Gastrocnemius medialis (tissue), 4 donors: ENCODE measurements at regions of chr21 and their contacts with region 1.

Region 1: DNA sequence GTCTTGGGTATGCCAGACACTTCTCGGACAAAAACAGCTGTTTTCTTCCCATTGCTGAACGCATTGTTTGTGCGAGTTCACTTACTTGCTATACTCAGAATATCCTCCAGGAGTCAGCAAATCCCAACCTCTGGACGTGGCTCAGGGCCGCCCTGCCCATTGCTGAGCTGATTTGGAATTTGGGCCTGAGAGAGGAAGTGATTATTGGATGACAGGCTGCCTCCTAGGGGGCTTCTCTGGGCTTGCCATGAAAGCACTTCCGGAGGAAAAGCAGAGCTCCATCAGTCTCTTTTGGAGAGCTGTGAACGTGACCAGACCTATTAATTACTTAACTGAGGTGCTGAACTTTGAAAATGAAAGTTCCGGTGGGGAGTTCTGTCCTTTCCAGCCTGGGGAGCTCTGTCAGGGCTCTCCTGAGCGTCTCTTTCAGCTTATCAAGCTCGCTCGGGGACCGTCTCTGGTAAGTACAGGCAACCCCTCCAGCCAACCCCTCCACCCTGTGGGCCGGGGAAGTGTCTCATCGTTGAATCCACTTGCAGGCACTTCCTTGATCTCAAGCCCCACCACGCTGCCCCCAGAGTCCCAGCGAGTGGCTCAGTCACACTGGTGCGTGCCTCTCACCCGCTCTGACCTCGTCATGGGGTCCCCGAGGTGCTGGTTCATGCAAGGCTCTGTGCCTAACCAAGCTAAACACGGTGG is 76.9 kb downstream of the CLIC6 start:
- DNase-seq: peak; percentile 48 to 61
- ATAC-seq: peak; percentile 87 to 90
- H3K4me3 ChIP-seq: peak overlapping the region in 1 of 4 donors; percentile 36
- H3K27ac ChIP-seq: peak overlapping the region in 1 of 4 donors; percentile 55
- H3K4me1 ChIP-seq: peaks cover 5 to 17% of the 10 kb centered on the region in 2 donors
- H3K27me3 ChIP-seq: no peaks in the 10 kb centered on the region
- CTCF ChIP-seq: peak; percentile 80 to 91 (median 88)
- POLR2A ChIP-seq: no peak

Region 2: DNA sequence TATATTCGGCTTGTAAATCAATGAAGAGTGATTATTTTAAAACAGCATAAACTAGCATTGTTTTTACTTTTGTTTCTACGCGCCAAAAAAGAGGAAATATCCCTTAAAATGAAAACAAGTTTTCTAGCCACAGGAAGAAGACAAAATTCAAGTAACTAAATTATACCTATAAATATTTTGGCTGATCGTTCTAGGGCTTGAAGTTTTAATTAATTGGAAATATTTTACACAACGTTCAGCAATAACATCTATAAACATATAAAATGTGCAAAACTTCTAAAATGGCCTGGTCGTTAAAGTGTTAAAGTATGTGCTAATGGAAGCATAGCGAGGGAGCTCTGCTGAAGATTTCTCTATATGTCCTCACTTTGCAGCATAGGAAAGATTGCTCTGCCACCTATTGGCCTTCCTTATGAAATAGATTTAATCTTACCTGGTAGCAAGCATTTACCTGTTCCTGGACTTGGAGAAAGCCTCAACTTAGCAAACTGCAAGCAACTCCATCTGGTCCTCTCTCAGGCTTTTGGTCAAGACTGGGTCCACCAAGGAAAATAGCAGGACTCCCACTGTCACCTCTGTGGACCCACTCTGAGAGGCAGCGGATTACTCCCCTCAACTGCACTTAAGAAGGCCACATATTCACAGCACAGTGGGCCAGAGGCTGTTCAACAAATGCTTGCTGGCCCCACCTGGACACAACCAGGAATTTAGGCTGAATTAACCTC is 654.7 kb after region 1 on chr21:
- in situ Hi-C with region 1: loop called in 2 of 4 experiments (anchors 5 to 10 kb)
- intact Hi-C with region 1: loop called (anchors 1 kb)
- DNase-seq: peak in 1 of 2 donors; percentile 8
- ATAC-seq: peak; percentile 93 to 98
- H3K4me3 ChIP-seq: no peak overlapping the region
- H3K27ac ChIP-seq: no peak overlapping the region
- H3K4me1 ChIP-seq: peaks cover 0 to 14% of the 10 kb centered on the region in 2 donors
- H3K27me3 ChIP-seq: no peaks in the 10 kb centered on the region
- CTCF ChIP-seq: peak; percentile 54 to 71 (median 59)
- POLR2A ChIP-seq: no peak

Region 3: DNA sequence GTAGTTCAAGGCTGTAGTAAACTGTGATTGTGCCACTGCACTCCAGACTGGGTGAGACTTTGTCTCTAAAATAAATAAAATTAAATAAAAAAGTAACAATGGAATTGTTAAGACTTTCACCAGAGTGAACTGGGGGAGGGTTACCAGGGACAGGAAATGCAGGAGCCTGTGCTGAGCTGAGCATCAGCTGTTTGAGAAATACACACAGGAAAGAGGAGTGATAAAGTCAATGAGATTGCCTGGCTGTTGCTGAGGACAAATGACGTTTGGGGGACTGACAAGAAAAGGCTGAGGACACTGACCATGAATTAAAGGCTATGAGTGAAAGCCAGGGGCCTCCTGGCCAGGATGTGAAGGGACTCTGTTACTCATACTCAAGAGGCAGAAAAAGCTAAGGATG is 1088.3 kb after region 1 on chr21:
- in situ Hi-C with region 1: loop called (anchors 10 to 25 kb)
- intact Hi-C with region 1: no loop called
- DNase-seq: no peak
- ATAC-seq: no peak
- H3K4me3 ChIP-seq: no peak overlapping the region
- H3K27ac ChIP-seq: no peak overlapping the region
- H3K4me1 ChIP-seq: no peaks in the 10 kb centered on the region
- H3K27me3 ChIP-seq: peaks cover 0 to 8% (median 0%) of the 10 kb centered on the region in 3 donors
- CTCF ChIP-seq: no peak
- POLR2A ChIP-seq: no peak

Region 4: DNA sequence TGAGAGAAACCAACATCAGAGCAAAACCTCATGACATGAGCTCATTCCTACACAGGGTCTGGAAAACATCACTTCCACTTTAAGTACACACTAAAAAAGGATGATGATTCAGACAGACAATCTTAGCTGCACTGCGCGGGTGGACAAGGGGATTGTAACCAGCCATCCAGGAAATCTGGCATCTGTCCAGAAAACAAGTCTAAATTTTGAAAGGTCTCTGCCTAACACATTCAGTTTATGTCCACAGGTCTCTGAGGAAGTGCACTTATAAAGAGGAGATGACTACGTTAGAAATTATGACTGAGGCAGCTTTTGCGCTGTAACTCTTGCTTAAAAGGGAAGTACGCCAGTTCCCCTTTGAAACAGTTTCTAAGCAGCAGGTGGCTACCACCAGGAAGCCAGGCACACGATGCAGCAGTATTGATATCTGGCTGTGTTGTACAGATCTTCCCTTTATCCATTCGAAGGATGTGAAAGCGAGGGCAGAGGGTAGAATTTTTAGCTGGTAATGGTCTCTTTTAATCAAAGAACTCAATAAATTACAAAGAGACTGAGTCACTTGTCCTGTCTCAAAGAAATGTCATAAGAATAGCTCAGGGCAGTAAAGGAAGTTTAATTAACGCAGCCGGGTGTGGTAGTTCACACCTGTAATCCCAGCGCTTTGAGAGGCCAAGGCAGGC is 1186.7 kb after region 1 on chr21:
- in situ Hi-C with region 1: loop called in 1 of 4 experiments (anchors 10 kb)
- intact Hi-C with region 1: no loop called
- DNase-seq: peak; percentile 62 to 69
- ATAC-seq: peak; percentile 94 to 97
- H3K4me3 ChIP-seq: peak overlapping the region in 1 of 4 donors; percentile 9
- H3K27ac ChIP-seq: peak overlapping the region; percentile 67 to 77 (median 72)
- H3K4me1 ChIP-seq: peaks cover 8 to 19% of the 10 kb centered on the region in 2 donors
- H3K27me3 ChIP-seq: no peaks in the 10 kb centered on the region
- CTCF ChIP-seq: no peak
- POLR2A ChIP-seq: peak; percentile 9 to 34

Region 5: DNA sequence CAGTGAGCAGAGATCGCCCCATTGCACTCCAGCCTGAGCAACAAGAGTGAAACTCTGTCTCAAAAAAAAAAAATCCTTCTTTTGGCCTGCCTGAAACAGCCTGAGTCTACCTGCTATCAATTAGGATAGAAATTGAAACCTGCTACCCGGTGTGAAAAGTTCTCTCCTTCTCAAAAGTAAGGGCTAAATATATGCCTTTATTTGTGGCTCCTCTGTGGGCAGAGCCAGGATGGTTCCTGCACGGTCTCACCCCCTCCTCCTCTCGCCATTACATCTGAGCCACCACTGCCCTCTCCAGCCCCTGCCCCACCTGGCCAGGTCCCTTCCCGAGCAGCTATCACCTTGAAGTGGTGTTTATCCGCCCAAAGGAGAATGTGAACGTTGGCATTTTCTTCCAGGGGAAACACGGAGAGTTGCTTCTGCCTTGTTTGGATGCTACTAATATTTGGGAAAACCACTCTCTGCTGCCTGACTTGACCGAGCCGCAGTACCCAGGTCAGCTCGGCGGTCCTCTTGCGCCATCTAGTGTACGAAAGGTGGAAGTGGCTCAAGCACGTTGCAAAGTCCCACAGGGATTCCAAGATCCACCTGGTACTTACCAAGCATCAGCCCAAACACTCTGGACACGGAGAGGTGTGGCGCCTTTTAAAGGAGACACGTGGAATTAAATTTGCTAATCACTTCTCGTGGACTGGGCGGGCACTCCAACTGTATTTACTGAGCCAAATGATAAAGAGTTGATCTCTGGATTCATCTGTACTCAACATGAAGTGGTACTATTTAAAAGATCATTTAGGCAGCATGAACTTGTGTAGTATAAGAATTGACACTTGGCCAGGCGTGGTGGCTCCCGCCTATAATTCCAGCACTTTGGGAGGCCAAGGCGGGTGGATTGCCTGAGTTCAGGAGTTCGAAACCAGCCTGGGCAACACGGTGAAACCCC is 1282.7 kb after region 1 on chr21:
- in situ Hi-C with region 1: no loop called
- intact Hi-C with region 1: loop called (anchors 5 kb)
- DNase-seq: peak; percentile 49 to 68
- ATAC-seq: peak; percentile 93 to 94
- H3K4me3 ChIP-seq: no peak overlapping the region
- H3K27ac ChIP-seq: no peak overlapping the region
- H3K4me1 ChIP-seq: peaks cover 3 to 4% of the 10 kb centered on the region in 2 donors
- H3K27me3 ChIP-seq: no peaks in the 10 kb centered on the region
- CTCF ChIP-seq: peak; percentile 83 to 98 (median 88)
- POLR2A ChIP-seq: no peak